Activated CD4-positive, alpha-beta memory T cell treated with anti-CD3 and anti-CD28 coated beads, Interleukin-2, amount 10 ng/mL, durations not matched to agents 7 days and 5 days (primary cell): ENCODE measurements at regions of chr10 and their contacts with region 1.

Region 1: GRCh38 chr10:68901104-68901927 is at the start of gene DDX50:
- DNase-seq: peak; percentile 97
- H3K4me3 Mint-ChIP-seq: peak within 1 kb of the TSS; percentile 93
- H3K27ac Mint-ChIP-seq: peak within 1 kb of the TSS; percentile 95
- H3K4me1 Mint-ChIP-seq: peaks cover 47% of the 10 kb centered on the region
- H3K27me3 Mint-ChIP-seq: no peaks in the 10 kb centered on the region
- total RNA-seq, gene DDX50: 51.9 to 56.2 TPM

Region 2: DNA sequence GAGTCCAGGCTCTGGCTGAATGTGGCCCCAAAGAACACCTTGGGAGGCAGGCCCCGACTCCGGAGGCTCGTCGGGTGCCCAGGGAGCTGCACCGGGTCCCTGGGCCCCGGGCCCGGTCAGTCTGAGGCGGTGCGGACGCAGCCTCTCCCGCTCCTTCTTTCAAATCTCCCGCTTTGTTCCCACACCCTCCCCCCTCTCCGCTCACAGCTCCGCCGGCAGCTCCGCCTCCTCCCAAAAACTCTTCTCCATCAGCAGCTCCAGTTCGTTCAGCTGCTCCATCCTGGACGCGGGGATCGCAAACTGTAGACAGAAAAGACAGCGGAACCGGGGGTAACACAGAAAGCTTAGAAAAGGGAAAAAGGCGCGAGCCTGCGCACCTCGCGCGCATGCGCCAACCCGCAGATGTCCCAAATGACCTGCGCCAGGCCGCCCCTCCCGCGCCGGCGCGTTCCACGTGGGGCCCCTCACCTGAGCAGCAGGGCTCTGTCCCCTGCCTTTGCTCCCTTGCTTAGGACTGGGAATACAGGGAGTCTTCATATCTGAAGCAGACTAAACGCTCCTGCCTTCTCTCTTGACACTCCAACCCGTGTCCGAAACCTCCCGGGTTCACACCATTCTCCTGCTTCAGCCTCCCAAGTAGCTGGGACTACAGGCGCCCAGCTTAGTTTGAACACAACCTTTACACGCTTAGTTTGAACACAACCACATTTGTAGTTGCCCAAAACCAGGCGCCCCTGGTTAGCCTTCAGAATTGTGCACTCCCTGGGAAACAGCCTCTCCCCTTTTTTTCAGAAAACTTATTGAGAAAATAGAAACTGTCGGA is 429.5 kb before region 1 on chr10 and contains the start of gene DNA2:
- CTCF ChIA-PET with region 1: no interaction called
- POLR2A ChIA-PET with region 1: interaction called, 18 read pairs
- DNase-seq: peak; percentile 81
- H3K4me3 Mint-ChIP-seq: peak within 1 kb of the TSS; percentile 93
- H3K27ac Mint-ChIP-seq: peak within 1 kb of the TSS; percentile 91
- H3K4me1 Mint-ChIP-seq: peaks cover 28% of the 10 kb centered on the region
- H3K27me3 Mint-ChIP-seq: no peaks in the 10 kb centered on the region
- total RNA-seq, gene DNA2: 34.7 to 40.4 TPM

Region 3: GRCh38 chr10:68501691-68502090 is 399.6 kb before region 1 on chr10:
- CTCF ChIA-PET with region 1: no interaction called
- POLR2A ChIA-PET with region 1: no interaction called
- DNase-seq: no peak
- H3K4me3 Mint-ChIP-seq: no peak overlapping the region
- H3K27ac Mint-ChIP-seq: no peak overlapping the region
- H3K4me1 Mint-ChIP-seq: no peaks in the 10 kb centered on the region
- H3K27me3 Mint-ChIP-seq: no peaks in the 10 kb centered on the region

Region 4: GRCh38 chr10:68600041-68600778 is 301.1 kb before region 1 on chr10:
- CTCF ChIA-PET with region 1: no interaction called
- POLR2A ChIA-PET with region 1: interaction called, 11 read pairs
- DNase-seq: peak; percentile 70
- H3K4me3 Mint-ChIP-seq: peak overlapping the region; percentile 78
- H3K27ac Mint-ChIP-seq: peak overlapping the region; percentile 79
- H3K4me1 Mint-ChIP-seq: peaks cover 33% of the 10 kb centered on the region
- H3K27me3 Mint-ChIP-seq: no peaks in the 10 kb centered on the region

Region 5: GRCh38 chr10:68826764-68827591 is 74.3 kb before region 1 on chr10 and contains the start of gene STOX1:
- CTCF ChIA-PET with region 1: no interaction called
- POLR2A ChIA-PET with region 1: interaction called, 12 read pairs
- DNase-seq: peak; percentile 60
- H3K4me3 Mint-ChIP-seq: peak within 1 kb of the TSS; percentile 69
- H3K27ac Mint-ChIP-seq: no peak within 1 kb of the TSS
- H3K4me1 Mint-ChIP-seq: peaks cover 8% of the 10 kb centered on the region
- H3K27me3 Mint-ChIP-seq: peaks cover 23% of the 10 kb centered on the region
- total RNA-seq, gene STOX1: 0.50 to 0.60 TPM